A673 (cell line): ENCODE measurements at regions of chr2 and their contacts with region 1.

Region 1: GRCh38 chr2:121356058-121356640 is 71.1 kb upstream of the TFCP2L1 start:
- DNase-seq: peak; percentile 76
- H3K4me3 ChIP-seq: no peak overlapping the region
- H3K27ac ChIP-seq: no peak overlapping the region
- H3K4me1 ChIP-seq: no peaks in the 10 kb centered on the region
- H3K27me3 ChIP-seq: no peaks in the 10 kb centered on the region
- CTCF ChIP-seq: peak; percentile 85

Region 2: GRCh38 chr2:121095257-121096080 is 260.7 kb before region 1 on chr2:
- CTCF ChIA-PET with region 1: interaction called, 31 read pairs
- POLR2A ChIA-PET with region 1: no interaction called
- intact Hi-C with region 1: loop called (anchors 5 kb)
- DNase-seq: peak; percentile 67
- H3K4me3 ChIP-seq: no peak overlapping the region
- H3K27ac ChIP-seq: no peak overlapping the region
- H3K4me1 ChIP-seq: no peaks in the 10 kb centered on the region
- H3K27me3 ChIP-seq: no peaks in the 10 kb centered on the region
- CTCF ChIP-seq: peak; percentile 85